ENCODE measurements at regions of chr1 and their contacts with region 1.

Region 1: GRCh38 chr1:160101037-160101716 is 2.8 kb upstream of the IGSF8 start:
- DNase-seq: peak; percentile 61
- H3K4me3 ChIP-seq: no peak overlapping the region
- H3K27ac ChIP-seq: peak overlapping the region; percentile 67 to 87
- H3K4me1 ChIP-seq: peaks cover 12% of the 10 kb centered on the region
- H3K27me3 ChIP-seq: no peaks in the 10 kb centered on the region
- CTCF ChIP-seq: peak; percentile 83 to 95 (median 94)
- POLR2A ChIP-seq: no peak

Region 2: DNA sequence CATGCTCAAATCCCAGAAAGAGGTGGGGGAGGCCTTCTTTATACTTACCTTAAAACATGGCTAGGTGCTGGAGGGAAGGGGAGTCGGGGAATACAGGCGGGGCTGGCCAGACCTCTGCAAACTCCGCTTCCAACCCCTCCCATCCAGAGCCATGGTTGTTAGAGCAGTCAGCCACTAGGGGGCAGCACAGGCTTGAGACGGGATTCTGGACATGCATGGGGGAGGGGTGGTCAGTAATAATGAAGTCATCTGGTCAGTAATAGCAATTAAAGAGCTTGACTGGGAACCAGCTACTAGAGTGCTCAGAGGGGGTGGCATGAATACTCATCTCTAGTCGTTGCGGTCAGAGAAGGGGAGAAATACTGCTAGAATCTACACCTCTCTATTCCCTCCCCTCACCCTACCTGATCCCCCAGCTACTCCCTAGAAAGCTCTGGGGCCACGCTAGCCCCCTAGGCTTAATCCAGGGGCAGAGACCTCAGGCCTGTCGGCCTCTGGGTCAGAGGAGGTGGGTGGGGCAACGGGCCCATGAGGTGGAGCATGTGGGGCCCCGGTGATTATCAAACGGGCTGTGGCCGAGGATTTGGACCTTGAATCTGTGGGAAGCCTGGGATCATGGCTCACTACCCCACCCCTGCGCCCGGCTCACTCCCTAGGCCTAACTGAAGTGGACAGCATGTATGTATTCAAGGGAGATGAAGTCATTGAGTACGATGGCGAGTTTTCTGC is 92.1 kb after region 1 on chr1:
- intact Hi-C with region 1: loop called (anchors 2 kb)
- DNase-seq: peak; percentile 80
- H3K4me3 ChIP-seq: no peak overlapping the region
- H3K27ac ChIP-seq: no peak overlapping the region
- H3K4me1 ChIP-seq: peaks cover 3% of the 10 kb centered on the region
- H3K27me3 ChIP-seq: no peaks in the 10 kb centered on the region
- CTCF ChIP-seq: peak; percentile 93 to 99 (median 97)
- POLR2A ChIP-seq: no peak

Region 3: DNA sequence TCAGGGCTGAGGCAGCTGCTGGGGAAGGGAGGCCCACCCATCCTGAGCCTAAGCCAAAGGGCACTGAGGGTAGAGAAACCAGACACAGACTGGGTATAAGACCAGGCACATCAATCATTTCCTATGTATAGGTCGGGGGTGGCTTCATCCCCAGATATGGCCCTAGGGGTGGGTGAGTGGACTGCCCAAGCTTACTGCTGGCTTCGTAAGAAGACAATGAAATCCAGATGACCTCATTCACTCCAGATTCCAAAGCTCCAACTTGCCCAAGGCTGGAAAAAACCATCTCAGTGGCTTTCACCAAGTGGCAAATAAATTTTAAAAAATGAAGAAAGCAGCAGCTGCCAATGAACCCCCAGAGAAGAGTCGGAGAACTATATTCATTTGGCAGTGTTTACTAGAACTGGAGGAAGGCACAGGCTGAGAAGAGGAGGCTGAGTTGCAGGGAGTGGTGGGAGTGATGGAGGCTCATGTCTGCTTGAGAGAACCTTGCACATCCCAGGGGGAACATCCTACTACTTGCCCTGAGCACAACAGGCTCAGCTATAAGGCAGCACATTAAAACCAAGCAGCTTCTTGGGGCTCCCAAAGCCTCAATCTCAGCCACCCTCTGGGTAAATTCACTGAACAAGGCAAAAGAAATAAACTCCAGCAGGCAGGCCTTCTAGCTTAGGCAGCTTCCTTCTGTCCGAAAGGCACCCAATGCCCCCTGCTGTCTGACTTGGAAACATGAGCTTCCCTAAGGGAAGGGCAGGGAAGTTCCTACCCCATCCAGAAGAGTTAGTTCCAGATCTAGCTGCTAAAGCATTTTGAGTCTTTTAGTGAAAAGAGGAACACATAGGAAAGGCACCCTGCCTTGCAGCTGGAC is 118.1 kb after region 1 on chr1:
- intact Hi-C with region 1: loop called (anchors 1 kb)
- DNase-seq: peak; percentile 39
- H3K4me3 ChIP-seq: no peak overlapping the region
- H3K27ac ChIP-seq: peak overlapping the region; percentile 8 to 47
- H3K4me1 ChIP-seq: no peaks in the 10 kb centered on the region
- H3K27me3 ChIP-seq: no peaks in the 10 kb centered on the region
- CTCF ChIP-seq: peak in 3 of 4 experiments; percentile 39 to 77 (median 60)
- POLR2A ChIP-seq: no peak

Region 4: GRCh38 chr1:160251687-160252526 is 150.7 kb after region 1 on chr1:
- intact Hi-C with region 1: loop called (anchors 5 kb)
- DNase-seq: peak; percentile 72
- H3K4me3 ChIP-seq: no peak overlapping the region
- H3K27ac ChIP-seq: no peak overlapping the region
- H3K4me1 ChIP-seq: no peaks in the 10 kb centered on the region
- H3K27me3 ChIP-seq: no peaks in the 10 kb centered on the region
- CTCF ChIP-seq: peak; percentile 25 to 85 (median 78)
- POLR2A ChIP-seq: no peak

Region 5: GRCh38 chr1:160291248-160292220 is 190.4 kb after region 1 on chr1:
- intact Hi-C with region 1: loop called (anchors 5 kb)
- DNase-seq: peak; percentile 67
- H3K4me3 ChIP-seq: no peak overlapping the region
- H3K27ac ChIP-seq: no peak overlapping the region
- H3K4me1 ChIP-seq: no peaks in the 10 kb centered on the region
- H3K27me3 ChIP-seq: no peaks in the 10 kb centered on the region
- CTCF ChIP-seq: peak; percentile 76 to 85 (median 80)
- POLR2A ChIP-seq: no peak

Region 6: GRCh38 chr1:160376525-160377131 is 275.5 kb after region 1 on chr1:
- intact Hi-C with region 1: loop called (anchors 5 kb)
- DNase-seq: no peak
- H3K4me3 ChIP-seq: no peak overlapping the region
- H3K27ac ChIP-seq: no peak overlapping the region
- H3K4me1 ChIP-seq: peaks cover 4% of the 10 kb centered on the region
- H3K27me3 ChIP-seq: no peaks in the 10 kb centered on the region
- CTCF ChIP-seq: peak in 3 of 4 experiments; percentile 56 to 83 (median 81)
- POLR2A ChIP-seq: no peak